H1 (cell line): ENCODE measurements at regions of chr14 and their contacts with region 1.

Region 1: DNA sequence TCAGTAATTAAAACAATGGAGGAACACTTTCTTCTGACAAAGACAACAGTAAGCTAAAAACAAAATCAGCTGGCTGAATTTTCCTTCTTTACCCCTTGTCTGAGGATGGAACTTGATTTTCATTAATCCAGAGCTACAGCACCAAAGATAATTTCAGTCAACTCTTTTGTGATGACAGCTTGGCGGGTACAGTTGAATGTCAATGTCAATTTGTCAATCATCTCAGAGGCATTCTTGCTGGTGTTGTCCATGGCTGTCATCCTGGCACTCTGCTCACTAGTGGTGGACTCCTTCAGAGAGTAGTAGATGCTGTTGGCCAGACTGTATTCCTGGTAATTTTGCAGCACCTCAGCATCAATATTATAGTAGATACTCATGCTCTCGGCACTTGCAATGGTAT is 34.4 kb upstream of the BMP4 start:
- DNase-seq: no peak
- H3K4me3 ChIP-seq: no peak overlapping the region
- H3K27ac ChIP-seq: no peak overlapping the region
- H3K4me1 ChIP-seq: peaks cover 0 to 3% (median 0%) of the 10 kb centered on the region in 4 experiments; a peak in 1 of 7 replicates
- H3K27me3 ChIP-seq: no peaks in the 10 kb centered on the region
- CTCF ChIP-seq: no peak
- EP300 ChIP-seq: no peak
- POLR2A ChIP-seq: no peak
- RAD21 ChIP-seq: no peak

Region 2: DNA sequence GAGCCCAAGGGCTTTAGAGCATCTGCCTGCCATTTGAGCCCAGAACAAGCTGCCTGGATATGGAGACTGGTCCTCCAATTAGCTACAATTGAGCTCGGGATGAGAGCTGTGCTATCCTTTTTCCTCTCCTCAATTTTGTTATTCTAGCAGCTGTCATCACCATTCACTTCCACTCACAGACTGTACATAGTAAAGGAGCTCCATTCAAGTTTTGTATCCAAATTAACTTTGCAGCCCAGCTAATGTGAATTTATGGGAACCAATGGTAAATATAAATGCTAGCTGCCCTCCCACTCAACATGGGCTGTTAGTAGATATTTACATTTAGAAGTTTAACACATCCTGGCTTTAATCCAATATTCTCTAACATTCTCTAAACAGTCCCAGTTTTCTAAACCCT is 79.0 kb before region 1 on chr14:
- CTCF ChIA-PET with region 1: no interaction called
- POLR2A ChIA-PET with region 1: no interaction called
- DNase-seq: no peak
- H3K4me3 ChIP-seq: no peak overlapping the region
- H3K27ac ChIP-seq: no peak overlapping the region
- H3K4me1 ChIP-seq: no peaks in the 10 kb centered on the region
- H3K27me3 ChIP-seq: no peaks in the 10 kb centered on the region
- CTCF ChIP-seq: no peak
- EP300 ChIP-seq: no peak
- POLR2A ChIP-seq: no peak
- RAD21 ChIP-seq: no peak

Region 3: GRCh38 chr14:54001189-54001913 is 10.4 kb after region 1 on chr14:
- CTCF ChIA-PET with region 1: interaction called, 12 read pairs
- POLR2A ChIA-PET with region 1: no interaction called
- DNase-seq: no peak
- H3K4me3 ChIP-seq: no peak overlapping the region
- H3K27ac ChIP-seq: no peak overlapping the region
- H3K4me1 ChIP-seq: 0 out of 7 replicates have a peak, but pooled peaks cover 0 to 4% (median 0%) of the 10 kb centered on the region in 4 experiments
- H3K27me3 ChIP-seq: no peaks in the 10 kb centered on the region
- CTCF ChIP-seq: peak; percentile 47 to 64 (median 51)
- EP300 ChIP-seq: no peak
- POLR2A ChIP-seq: no peak
- RAD21 ChIP-seq: peak; percentile 57 to 64

Region 4: GRCh38 chr14:54048311-54048710 is 57.3 kb after region 1 on chr14:
- CTCF ChIA-PET with region 1: no interaction called
- POLR2A ChIA-PET with region 1: no interaction called
- DNase-seq: no peak
- H3K4me3 ChIP-seq: no peak overlapping the region
- H3K27ac ChIP-seq: no peak overlapping the region
- H3K4me1 ChIP-seq: no peaks in the 10 kb centered on the region
- H3K27me3 ChIP-seq: no peaks in the 10 kb centered on the region
- CTCF ChIP-seq: no peak
- EP300 ChIP-seq: no peak
- POLR2A ChIP-seq: no peak
- RAD21 ChIP-seq: no peak